Naive thymus-derived CD4-positive, alpha-beta T cell (primary cell): ENCODE measurements at regions of chr17 and their contacts with region 1.

Region 1: GRCh38 chr17:21126645-21127510 is at the start of gene DHRS7B:
- DNase-seq: peak; percentile 91 to 97 (median 95)
- ATAC-seq: peak; percentile 90
- H3K4me3 ChIP-seq: peak within 1 kb of the TSS; percentile 86
- H3K4me3 Mint-ChIP-seq: peak within 1 kb of the TSS; percentile 90 to 100 (median 97)
- H3K27ac ChIP-seq: peak within 1 kb of the TSS; percentile 84
- H3K27ac Mint-ChIP-seq: peak within 1 kb of the TSS; percentile 93 to 99 (median 98)
- H3K4me1 ChIP-seq: peaks cover 18 to 19% of the 10 kb centered on the region in 2 donors
- H3K4me1 Mint-ChIP-seq: peaks cover 26 to 58% (median 48%) of the 10 kb centered on the region in 7 donors
- H3K27me3 ChIP-seq: no peaks in the 10 kb centered on the region
- H3K27me3 Mint-ChIP-seq: peaks cover 0 to 10% (median 0%) of the 10 kb centered on the region in 5 donors
- total RNA-seq, gene DHRS7B: 7.5 to 15.1 (median 10.0) TPM

Region 2: DNA sequence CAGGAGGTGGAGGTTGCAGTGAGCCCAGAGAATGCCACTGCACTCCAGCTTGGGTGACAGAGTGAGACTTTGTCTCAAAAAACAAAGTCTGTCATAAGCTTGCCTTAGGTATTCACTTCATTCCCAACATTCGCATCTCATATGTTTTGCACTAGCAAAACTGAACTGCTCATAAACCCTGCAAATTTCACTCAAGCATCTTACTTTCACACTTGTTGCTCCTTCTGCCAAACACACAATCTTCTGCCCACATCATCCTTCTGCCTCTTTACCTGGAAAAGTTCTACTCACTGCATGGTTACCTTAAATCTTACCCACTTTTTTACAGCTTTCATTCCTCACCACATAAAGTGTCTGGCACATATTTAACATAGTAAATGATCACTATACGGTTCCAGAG is 236.5 kb before region 1 on chr17:
- CTCF ChIA-PET with region 1: no interaction called
- POLR2A ChIA-PET with region 1: no interaction called
- intact Hi-C with region 1: no loop called
- DNase-seq: no peak
- ATAC-seq: no peak
- H3K4me3 ChIP-seq: no peak overlapping the region
- H3K4me3 Mint-ChIP-seq: no peak overlapping the region
- H3K27ac ChIP-seq: no peak overlapping the region
- H3K27ac Mint-ChIP-seq: no peak overlapping the region
- H3K4me1 ChIP-seq: no peaks in the 10 kb centered on the region
- H3K4me1 Mint-ChIP-seq: peaks cover 0 to under 1% (median 0%) of the 10 kb centered on the region in 7 donors
- H3K27me3 ChIP-seq: no peaks in the 10 kb centered on the region
- H3K27me3 Mint-ChIP-seq: peaks cover 0 to 29% (median 27%) of the 10 kb centered on the region in 5 donors

Region 3: GRCh38 chr17:21098934-21099689 is 27.8 kb before region 1 on chr17:
- CTCF ChIA-PET with region 1: no interaction called
- POLR2A ChIA-PET with region 1: no interaction called
- intact Hi-C with region 1: loop called (anchors 1 kb)
- DNase-seq: peak; percentile 16 to 76 (median 67)
- ATAC-seq: peak; percentile 96
- H3K4me3 ChIP-seq: peak overlapping the region; percentile 70
- H3K4me3 Mint-ChIP-seq: peak overlapping the region; percentile 86 to 96 (median 90)
- H3K27ac ChIP-seq: no peak overlapping the region
- H3K27ac Mint-ChIP-seq: peak overlapping the region in 7 of 9 donors; percentile 3 to 94 (median 31)
- H3K4me1 ChIP-seq: peaks cover 0 to 4% of the 10 kb centered on the region in 2 donors
- H3K4me1 Mint-ChIP-seq: peaks cover 11 to 24% (median 16%) of the 10 kb centered on the region in 7 donors
- H3K27me3 ChIP-seq: no peaks in the 10 kb centered on the region
- H3K27me3 Mint-ChIP-seq: no peaks in the 10 kb centered on the region

Region 4: DNA sequence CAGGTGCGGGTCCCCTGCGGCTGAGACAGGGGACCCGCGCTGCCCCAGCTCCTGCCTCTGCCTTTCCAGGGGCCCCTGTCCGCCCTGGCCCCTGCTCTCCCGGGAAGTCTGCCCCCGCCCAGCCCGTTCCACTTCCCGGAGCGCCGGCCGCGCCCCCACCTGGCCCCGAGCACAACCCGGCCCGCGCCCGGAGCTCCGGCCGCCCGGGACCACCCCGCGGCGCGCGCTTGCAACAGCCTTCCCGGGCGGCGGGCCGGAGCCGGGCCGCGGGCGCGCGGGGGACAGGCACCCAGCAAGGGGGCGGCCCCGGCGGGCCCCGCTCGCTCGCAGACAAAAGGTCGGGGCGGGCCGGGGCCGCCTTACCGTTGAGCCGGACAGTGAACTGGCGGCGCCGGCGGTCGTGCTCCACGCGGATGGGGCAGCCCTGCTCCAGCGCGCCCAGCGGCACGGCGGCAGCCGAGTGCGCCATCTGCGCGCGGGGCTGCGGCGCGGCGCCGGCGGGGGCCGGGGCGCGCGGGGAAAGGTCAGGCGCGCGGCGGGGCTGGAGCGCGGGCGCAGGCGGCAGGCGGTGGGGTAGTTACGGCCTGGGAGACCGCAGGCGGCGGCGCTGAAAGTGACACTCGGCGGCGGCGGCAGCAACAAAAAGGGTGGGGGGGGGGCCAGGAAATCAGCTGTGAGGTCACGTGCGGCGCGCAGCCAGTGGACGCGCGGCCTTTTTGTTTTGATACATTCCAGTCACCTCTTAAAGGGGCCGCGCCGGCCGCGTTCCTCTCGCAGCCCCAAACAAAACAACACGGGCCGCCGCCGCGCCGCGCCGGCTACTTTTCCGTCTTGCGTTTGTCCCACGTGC is 126.1 kb after region 1 on chr17 and contains the start of gene NATD1:
- CTCF ChIA-PET with region 1: no interaction called
- POLR2A ChIA-PET with region 1: no interaction called
- intact Hi-C with region 1: loop called in 1 of 2 experiments (anchors 1 kb)
- DNase-seq: peak; percentile 60 to 82 (median 75)
- ATAC-seq: peak; percentile 90
- H3K4me3 ChIP-seq: peak within 1 kb of the TSS; percentile 73
- H3K4me3 Mint-ChIP-seq: peak within 1 kb of the TSS; percentile 78 to 97 (median 88)
- H3K27ac ChIP-seq: peak within 1 kb of the TSS; percentile 77
- H3K27ac Mint-ChIP-seq: peak within 1 kb of the TSS; percentile 66 to 97 (median 93)
- H3K4me1 ChIP-seq: peaks cover 7 to 12% of the 10 kb centered on the region in 2 donors
- H3K4me1 Mint-ChIP-seq: peaks cover 19 to 43% (median 39%) of the 10 kb centered on the region in 7 donors
- H3K27me3 ChIP-seq: no peaks in the 10 kb centered on the region
- H3K27me3 Mint-ChIP-seq: peaks cover 0 to 35% (median 0%) of the 10 kb centered on the region in 5 donors
- total RNA-seq, gene NATD1: 2.5 to 11.1 (median 8.9) TPM

Region 5: GRCh38 chr17:21284319-21285163 is 157.7 kb after region 1 on chr17 and contains the start of gene MAP2K3:
- CTCF ChIA-PET with region 1: interaction called, 4 read pairs
- POLR2A ChIA-PET with region 1: interaction called, 6 read pairs
- intact Hi-C with region 1: loop called (anchors 1 to 2 kb)
- DNase-seq: peak; percentile 79 to 98 (median 84)
- ATAC-seq: peak; percentile 78
- H3K4me3 ChIP-seq: peak within 1 kb of the TSS; percentile 90
- H3K4me3 Mint-ChIP-seq: peak within 1 kb of the TSS; percentile 88 to 99 (median 96)
- H3K27ac ChIP-seq: peak within 1 kb of the TSS; percentile 78
- H3K27ac Mint-ChIP-seq: peak within 1 kb of the TSS; percentile 88 to 97 (median 96)
- H3K4me1 ChIP-seq: peaks cover 39 to 40% of the 10 kb centered on the region in 2 donors
- H3K4me1 Mint-ChIP-seq: peaks cover 32 to 57% (median 52%) of the 10 kb centered on the region in 7 donors
- H3K27me3 ChIP-seq: no peaks in the 10 kb centered on the region
- H3K27me3 Mint-ChIP-seq: no peaks in the 10 kb centered on the region
- total RNA-seq, gene MAP2K3: 37.5 to 127 (median 39.2) TPM

Region 6: DNA sequence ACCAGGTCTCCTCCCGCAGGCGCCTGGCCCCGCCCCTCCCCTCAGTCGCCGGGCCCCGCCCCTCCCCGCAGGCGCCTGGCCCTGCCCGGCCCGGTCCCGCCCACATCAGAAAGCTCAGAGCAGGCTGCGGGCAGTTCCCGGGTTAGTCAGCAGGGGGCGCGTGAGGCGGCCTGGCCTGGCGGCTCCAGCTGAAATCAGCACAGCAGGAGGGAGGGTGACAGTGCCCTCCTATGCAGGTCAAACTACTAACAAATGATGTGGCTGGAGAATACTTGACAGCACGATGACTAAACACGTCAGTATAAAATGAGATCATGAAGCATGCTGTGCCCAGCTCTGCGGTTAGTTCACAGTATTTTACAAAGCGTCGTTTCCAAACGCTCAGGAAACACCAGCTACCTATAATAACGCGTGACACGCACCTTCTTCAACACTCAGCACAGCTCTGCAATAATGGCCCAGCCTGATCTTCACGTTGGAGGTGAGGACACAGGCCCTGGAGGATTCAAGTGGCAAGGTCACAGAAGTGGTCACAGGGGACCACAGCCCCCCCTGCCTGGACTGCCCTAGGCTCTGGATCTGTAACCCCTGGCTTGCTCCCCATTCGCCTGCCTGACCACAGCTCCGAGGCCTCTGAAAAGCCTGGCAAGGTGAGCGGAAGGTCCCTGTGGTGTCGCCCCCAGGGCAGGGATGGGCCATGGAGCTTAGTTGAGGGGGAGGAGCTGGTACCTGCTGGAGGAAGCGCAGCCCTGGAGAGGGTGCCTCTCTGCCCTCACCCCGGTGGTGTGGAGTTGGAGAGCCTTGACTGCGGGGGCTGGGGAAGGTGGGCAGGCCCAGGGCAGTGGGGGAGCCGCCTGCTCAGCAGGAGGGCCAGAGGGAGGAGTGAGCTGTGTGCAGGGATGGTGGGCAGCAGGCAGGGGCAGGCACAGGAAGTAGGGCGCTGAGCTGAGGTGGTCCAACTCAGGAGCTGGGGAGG is 330.5 kb after region 1 on chr17:
- CTCF ChIA-PET with region 1: no interaction called
- POLR2A ChIA-PET with region 1: no interaction called
- intact Hi-C with region 1: loop called in 1 of 2 experiments (anchors 1 kb)
- DNase-seq: peak; percentile 85 to 97 (median 90)
- ATAC-seq: peak; percentile 97
- H3K4me3 ChIP-seq: no peak overlapping the region
- H3K4me3 Mint-ChIP-seq: peak overlapping the region in 7 of 10 donors; percentile 27 to 71 (median 43)
- H3K27ac ChIP-seq: peak overlapping the region; percentile 19
- H3K27ac Mint-ChIP-seq: peak overlapping the region in 7 of 9 donors; percentile 36 to 82 (median 73)
- H3K4me1 ChIP-seq: peaks cover 0 to 6% of the 10 kb centered on the region in 2 donors
- H3K4me1 Mint-ChIP-seq: peaks cover 10 to 25% (median 18%) of the 10 kb centered on the region in 7 donors
- H3K27me3 ChIP-seq: no peaks in the 10 kb centered on the region
- H3K27me3 Mint-ChIP-seq: peaks cover 0 to 37% (median 0%) of the 10 kb centered on the region in 5 donors

Region 7: DNA sequence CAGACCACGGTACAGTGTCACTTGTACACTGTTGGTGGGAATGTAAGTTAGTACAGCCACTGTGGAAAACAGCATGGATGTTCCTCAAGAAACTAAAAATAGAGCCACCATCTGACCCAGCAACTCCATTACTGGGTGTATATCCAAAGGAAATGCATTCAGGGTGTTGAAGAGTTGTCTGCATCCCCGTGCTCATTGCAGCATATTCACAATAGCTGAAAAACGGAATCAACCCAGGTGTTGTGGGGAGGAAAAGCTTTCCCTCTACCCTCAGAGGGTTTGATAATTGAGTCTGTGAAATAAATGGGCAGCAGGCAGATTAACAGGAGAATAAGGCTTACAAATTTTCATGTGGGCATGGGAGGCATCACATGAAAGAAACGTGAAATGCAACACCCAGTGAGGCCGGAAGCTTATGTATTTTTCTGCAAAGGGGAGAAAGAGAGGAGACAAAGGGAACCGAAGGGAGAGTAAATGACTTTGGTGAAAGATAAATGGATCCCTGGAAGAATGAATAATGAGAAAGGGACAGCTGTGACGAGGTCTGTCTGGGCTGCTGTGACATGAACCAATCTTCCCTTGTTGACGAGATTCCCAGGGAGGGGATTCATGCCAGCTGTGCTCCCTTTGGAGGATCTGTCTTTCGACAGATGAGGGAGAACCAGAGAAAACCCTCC is 355.4 kb after region 1 on chr17:
- CTCF ChIA-PET with region 1: no interaction called
- POLR2A ChIA-PET with region 1: no interaction called
- intact Hi-C with region 1: no loop called
- DNase-seq: no peak
- ATAC-seq: no peak
- H3K4me3 ChIP-seq: no peak overlapping the region
- H3K4me3 Mint-ChIP-seq: no peak overlapping the region
- H3K27ac ChIP-seq: no peak overlapping the region
- H3K27ac Mint-ChIP-seq: no peak overlapping the region
- H3K4me1 ChIP-seq: no peaks in the 10 kb centered on the region
- H3K4me1 Mint-ChIP-seq: no peaks in the 10 kb centered on the region
- H3K27me3 ChIP-seq: no peaks in the 10 kb centered on the region
- H3K27me3 Mint-ChIP-seq: peaks cover 27 to 50% (median 39%) of the 10 kb centered on the region in 5 donors